IMR-90 (cell line): ENCODE measurements at regions of chr13 and their contacts with region 1.

Region 1: GRCh38 chr13:90329641-90330040 is 1017.8 kb upstream of the MIR17HG start:
- DNase-seq: no peak
- ATAC-seq: no peak
- H3K4me3 ChIP-seq: no peak overlapping the region
- H3K27ac ChIP-seq: no peak overlapping the region
- H3K4me1 ChIP-seq: no peaks in the 10 kb centered on the region
- H3K27me3 ChIP-seq: no peaks in the 10 kb centered on the region
- CTCF ChIP-seq: no peak
- POLR2A ChIP-seq: no peak
- RAD21 ChIP-seq: no peak

Region 2: GRCh38 chr13:90171649-90172048 is 158.0 kb before region 1 on chr13:
- CTCF ChIA-PET with region 1: no interaction called
- POLR2A ChIA-PET with region 1: no interaction called
- dilution Hi-C with region 1: no loop called
- in situ Hi-C with region 1: no loop called
- intact Hi-C with region 1: loop called (anchors 5 kb)
- DNase-seq: no peak
- ATAC-seq: no peak
- H3K4me3 ChIP-seq: no peak overlapping the region
- H3K27ac ChIP-seq: no peak overlapping the region
- H3K4me1 ChIP-seq: no peaks in the 10 kb centered on the region
- H3K27me3 ChIP-seq: no peaks in the 10 kb centered on the region
- CTCF ChIP-seq: no peak
- POLR2A ChIP-seq: no peak
- RAD21 ChIP-seq: no peak